ENCODE measurements at regions of chr17 and their contacts with region 1.

Region 1: DNA sequence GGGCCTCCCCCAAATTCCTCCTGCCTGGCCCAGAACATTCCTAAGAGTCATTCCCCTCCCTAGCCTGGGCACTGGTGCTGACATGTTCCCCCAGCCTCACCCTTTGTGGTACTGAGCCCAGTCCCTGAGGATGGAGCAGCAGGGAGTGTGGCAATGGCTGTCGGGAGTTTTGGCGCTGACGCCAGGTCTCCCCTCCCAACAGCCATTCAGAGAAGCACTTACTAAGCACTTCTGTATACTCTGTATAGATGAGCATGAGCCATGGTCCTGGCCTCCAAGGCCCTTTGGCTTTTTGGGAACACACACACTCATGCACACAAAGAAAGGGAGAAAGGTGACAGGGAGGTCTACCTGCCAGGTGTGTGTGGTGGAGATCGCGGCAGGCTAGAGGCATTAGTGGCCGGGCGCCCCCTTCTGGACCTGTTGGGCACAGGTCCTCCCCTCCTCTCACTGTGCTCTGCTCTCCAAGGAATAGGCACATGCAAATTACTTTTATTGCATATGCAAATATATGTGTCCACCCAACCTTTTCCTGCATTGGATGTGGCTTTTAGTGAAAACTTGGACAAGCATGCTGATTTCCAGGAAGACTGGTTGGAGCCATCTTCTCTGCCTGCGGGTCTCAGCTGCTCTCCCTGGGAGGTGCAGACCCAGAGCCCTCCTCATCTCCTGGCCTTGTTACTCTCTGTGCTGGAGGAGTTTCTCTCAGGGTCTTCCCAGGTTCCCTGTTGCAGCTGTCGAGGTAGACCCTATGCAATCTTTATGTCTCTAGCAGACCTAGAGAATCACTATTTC is 17.4 kb upstream of the C17orf107 start:
- DNase-seq: peak; percentile 50 to 69 (median 55)
- ATAC-seq: peak; percentile 97
- H3K4me3 ChIP-seq: no peak overlapping the region
- H3K27ac ChIP-seq: no peak overlapping the region
- H3K4me1 ChIP-seq: no peaks in the 10 kb centered on the region
- H3K27me3 ChIP-seq: no peaks in the 10 kb centered on the region
- CTCF ChIP-seq: peak; percentile 74 to 83 (median 80)
- EP300 ChIP-seq: no peak
- POLR2A ChIP-seq: no peak
- RAD21 ChIP-seq: peak; percentile 59 to 83

Region 2: GRCh38 chr17:4533535-4533967 is 348.4 kb before region 1 on chr17:
- CTCF ChIA-PET with region 1: no interaction called
- POLR2A ChIA-PET with region 1: no interaction called
- in situ Hi-C with region 1: no loop called
- intact Hi-C with region 1: no loop called
- DNase-seq: no peak
- ATAC-seq: no peak
- H3K4me3 ChIP-seq: no peak overlapping the region
- H3K27ac ChIP-seq: no peak overlapping the region
- H3K4me1 ChIP-seq: peaks cover 0 to 58% of the 10 kb centered on the region in 2 experiments; a peak in 3 of 5 replicates
- H3K27me3 ChIP-seq: peaks cover 0 to 13% of the 10 kb centered on the region in 2 experiments; a peak in 3 of 5 replicates
- CTCF ChIP-seq: no peak
- EP300 ChIP-seq: no peak
- POLR2A ChIP-seq: no peak
- RAD21 ChIP-seq: no peak

Region 3: GRCh38 chr17:4789901-4790704 is 91.9 kb before region 1 on chr17:
- CTCF ChIA-PET with region 1: no interaction called
- POLR2A ChIA-PET with region 1: no interaction called
- in situ Hi-C with region 1: no loop called
- intact Hi-C with region 1: loop called (anchors 2 kb)
- DNase-seq: peak; percentile 85 to 91 (median 88)
- ATAC-seq: peak; percentile 98
- H3K4me3 ChIP-seq: peak overlapping the region; percentile 60
- H3K27ac ChIP-seq: peak overlapping the region; percentile 82
- H3K4me1 ChIP-seq: peaks cover 0 to 31% of the 10 kb centered on the region in 2 experiments; a peak in 2 of 5 replicates
- H3K27me3 ChIP-seq: peaks cover 3 to 11% of the 10 kb centered on the region in 2 experiments; a peak in 3 of 5 replicates
- CTCF ChIP-seq: peak; percentile 70 to 98 (median 86)
- EP300 ChIP-seq: no peak
- POLR2A ChIP-seq: peak; percentile 69; the same call in 1 of the 2 replicates
- RAD21 ChIP-seq: peak; percentile 54 to 64

Region 4: DNA sequence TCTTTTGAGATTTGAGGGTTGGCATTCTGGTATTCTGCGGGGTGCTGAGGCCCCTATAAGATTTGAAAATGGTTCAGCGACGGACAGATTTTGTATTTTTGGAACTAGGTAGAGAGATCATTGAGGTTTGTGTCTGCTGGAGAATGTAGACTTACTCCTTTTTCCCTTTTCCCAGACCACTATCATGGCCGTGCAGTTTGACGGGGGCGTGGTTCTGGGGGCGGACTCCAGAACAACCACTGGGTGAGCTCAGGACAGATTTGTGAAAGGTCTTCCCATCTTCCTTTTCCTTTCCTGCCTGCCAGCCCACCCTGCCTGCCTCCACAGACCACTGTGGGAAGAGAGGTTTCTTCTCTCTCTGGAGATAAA is 85.4 kb before region 1 on chr17:
- CTCF ChIA-PET with region 1: no interaction called
- POLR2A ChIA-PET with region 1: no interaction called
- in situ Hi-C with region 1: loop called (anchors 5 kb)
- intact Hi-C with region 1: no loop called
- DNase-seq: peak; percentile 50 to 60 (median 52)
- ATAC-seq: peak; percentile 88
- H3K4me3 ChIP-seq: peak overlapping the region; percentile 97
- H3K27ac ChIP-seq: peak overlapping the region; percentile 82
- H3K4me1 ChIP-seq: peaks cover 0 to 5% of the 10 kb centered on the region in 2 experiments; a peak in 2 of 5 replicates
- H3K27me3 ChIP-seq: no peaks in the 10 kb centered on the region
- CTCF ChIP-seq: no peak
- EP300 ChIP-seq: no peak
- POLR2A ChIP-seq: no peak
- RAD21 ChIP-seq: no peak

Region 5: DNA sequence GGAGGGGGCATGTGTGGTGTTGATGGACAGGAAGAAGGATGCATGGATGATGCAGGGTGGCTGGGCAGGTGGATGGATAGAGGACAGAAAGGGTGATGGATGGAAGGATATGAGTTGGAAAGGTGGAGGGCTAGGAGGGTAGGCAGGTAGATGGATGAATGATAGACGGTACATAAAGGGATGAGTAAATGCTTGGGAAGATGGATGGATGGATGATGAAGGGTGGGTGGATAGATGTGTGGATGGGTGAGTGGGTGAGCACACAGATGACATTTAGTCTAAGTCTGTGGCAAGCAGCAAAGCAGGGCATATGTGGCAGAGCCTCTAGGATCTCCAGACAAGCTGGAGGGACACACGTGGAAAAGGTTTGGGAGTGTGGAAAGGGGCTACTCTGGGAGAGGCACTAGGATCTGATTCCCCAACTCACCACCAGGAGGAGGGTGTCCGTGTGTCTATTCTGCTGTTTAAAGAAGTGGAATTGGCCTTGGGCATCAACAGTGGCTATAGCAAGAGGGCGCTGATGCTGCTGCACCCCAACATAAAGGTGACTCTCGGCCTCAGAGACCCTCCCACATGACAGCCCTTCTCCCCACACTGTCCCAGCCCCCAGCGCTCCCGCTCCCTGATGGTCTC is 66.8 kb before region 1 on chr17:
- CTCF ChIA-PET with region 1: interaction called, 4 read pairs
- POLR2A ChIA-PET with region 1: no interaction called
- in situ Hi-C with region 1: no loop called
- intact Hi-C with region 1: loop called (anchors 5 kb)
- DNase-seq: peak in 2 of 4 experiments; percentile 24 to 28
- ATAC-seq: peak; percentile 79
- H3K4me3 ChIP-seq: no peak overlapping the region
- H3K27ac ChIP-seq: no peak overlapping the region
- H3K4me1 ChIP-seq: peaks cover 0 to 4% of the 10 kb centered on the region in 2 experiments; a peak in 3 of 5 replicates
- H3K27me3 ChIP-seq: no peaks in the 10 kb centered on the region
- CTCF ChIP-seq: peak; percentile 61 to 75 (median 72)
- EP300 ChIP-seq: no peak
- POLR2A ChIP-seq: no peak
- RAD21 ChIP-seq: peak in 1 of 2 experiments; percentile 37; a peak in 2 of 4 replicates

Measured in K562 (cell line).